ENCODE measurements at regions of chr11 and their contacts with region 1.

Region 1: GRCh38 chr11:134068829-134069425 is at the start of gene JAM3:
- DNase-seq: peak; percentile 96 to 97
- ATAC-seq: peak; percentile 98 to 99 (median 99)
- H3K4me3 ChIP-seq: peak within 1 kb of the TSS; percentile 66 to 96 (median 87)
- H3K27ac ChIP-seq: peak within 1 kb of the TSS; percentile 70 to 92 (median 86)
- H3K4me1 ChIP-seq: peaks cover 0 to 22% (median 18%) of the 10 kb centered on the region in 9 donors
- H3K27me3 ChIP-seq: peaks cover 0 to 31% (median 0%) of the 10 kb centered on the region in 7 donors
- CTCF ChIP-seq: no peak
- total RNA-seq, gene JAM3: 20.4 to 55.4 (median 34.9) TPM

Region 2: GRCh38 chr11:134101282-134101681 is 32.4 kb after region 1 on chr11:
- intact Hi-C with region 1: no loop called
- DNase-seq: no peak
- ATAC-seq: no peak
- H3K4me3 ChIP-seq: no peak overlapping the region
- H3K27ac ChIP-seq: no peak overlapping the region
- H3K4me1 ChIP-seq: no peaks in the 10 kb centered on the region
- H3K27me3 ChIP-seq: no peaks in the 10 kb centered on the region
- CTCF ChIP-seq: no peak

Region 3: GRCh38 chr11:134124660-134125451 is 55.9 kb after region 1 on chr11:
- intact Hi-C with region 1: loop called in 7 of 10 experiments (anchors 1 to 5 kb)
- DNase-seq: peak; percentile 52 to 71
- ATAC-seq: peak; percentile 55 to 87 (median 67)
- H3K4me3 ChIP-seq: peak overlapping the region; percentile 19 to 62 (median 56)
- H3K27ac ChIP-seq: peak overlapping the region; percentile 24 to 95 (median 80)
- H3K4me1 ChIP-seq: peaks cover 8 to 71% (median 57%) of the 10 kb centered on the region in 9 donors
- H3K27me3 ChIP-seq: peaks cover 0 to 19% (median 0%) of the 10 kb centered on the region in 7 donors
- CTCF ChIP-seq: peak in 3 of 9 donors; percentile 31 to 41 (median 38)

Region 4: GRCh38 chr11:134417871-134418840 is 349.2 kb after region 1 on chr11:
- intact Hi-C with region 1: no loop called
- DNase-seq: no peak
- ATAC-seq: no peak
- H3K4me3 ChIP-seq: no peak overlapping the region
- H3K27ac ChIP-seq: no peak overlapping the region
- H3K4me1 ChIP-seq: no peaks in the 10 kb centered on the region
- H3K27me3 ChIP-seq: peaks cover 9 to 77% (median 53%) of the 10 kb centered on the region in 7 donors
- CTCF ChIP-seq: no peak

Region 5: GRCh38 chr11:134557571-134558257 is 488.8 kb after region 1 on chr11:
- intact Hi-C with region 1: no loop called
- DNase-seq: no peak
- ATAC-seq: no peak
- H3K4me3 ChIP-seq: no peak overlapping the region
- H3K27ac ChIP-seq: no peak overlapping the region
- H3K4me1 ChIP-seq: no peaks in the 10 kb centered on the region
- H3K27me3 ChIP-seq: peaks cover 0 to 62% (median 15%) of the 10 kb centered on the region in 7 donors
- CTCF ChIP-seq: no peak